ENCODE measurements at regions of chr6 and their contacts with region 1.

Region 1: GRCh38 chr6:123715006-123715875 is 78.5 kb upstream of the TRDN start:
- DNase-seq: no peak
- H3K4me3 Mint-ChIP-seq: no peak overlapping the region
- H3K27ac Mint-ChIP-seq: no peak overlapping the region
- H3K4me1 Mint-ChIP-seq: no peaks in the 10 kb centered on the region
- H3K27me3 Mint-ChIP-seq: no peaks in the 10 kb centered on the region

Region 2: DNA sequence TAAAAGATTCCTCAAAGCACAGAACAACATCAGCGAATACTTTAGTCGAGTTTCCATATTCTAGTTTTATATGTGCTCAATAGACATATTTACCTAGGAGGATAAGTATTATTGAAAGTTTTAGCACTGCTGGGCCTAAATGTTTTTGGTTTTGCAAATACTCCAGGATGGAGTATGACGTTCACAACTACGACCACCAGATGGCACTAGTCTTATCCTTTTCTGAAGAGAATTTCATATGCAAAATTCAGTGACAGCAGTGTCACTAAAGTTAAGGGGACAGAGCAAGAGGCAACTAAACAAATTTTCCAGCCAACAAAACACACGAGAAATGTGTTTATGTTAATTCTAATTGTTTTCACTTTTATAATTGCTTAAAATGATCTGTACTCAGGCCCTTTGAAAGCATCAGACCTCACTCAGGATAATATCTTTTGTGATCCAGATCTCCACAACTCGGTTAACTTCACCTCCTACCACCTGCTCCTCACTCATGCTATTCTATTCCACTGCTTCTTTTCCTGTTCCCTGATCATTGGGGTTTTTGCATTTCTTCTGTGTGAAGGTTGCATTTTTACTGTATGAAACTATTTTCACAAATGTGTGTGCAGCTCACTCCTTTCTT is 299.3 kb before region 1 on chr6:
- CTCF ChIA-PET with region 1: interaction called, 13 read pairs
- DNase-seq: peak; percentile 52
- H3K4me3 Mint-ChIP-seq: no peak overlapping the region
- H3K27ac Mint-ChIP-seq: no peak overlapping the region
- H3K4me1 Mint-ChIP-seq: no peaks in the 10 kb centered on the region
- H3K27me3 Mint-ChIP-seq: no peaks in the 10 kb centered on the region

Region 3: GRCh38 chr6:123562264-123562663 is 153.0 kb before region 1 on chr6:
- CTCF ChIA-PET with region 1: no interaction called
- DNase-seq: no peak
- H3K4me3 Mint-ChIP-seq: no peak overlapping the region
- H3K27ac Mint-ChIP-seq: no peak overlapping the region
- H3K4me1 Mint-ChIP-seq: no peaks in the 10 kb centered on the region
- H3K27me3 Mint-ChIP-seq: no peaks in the 10 kb centered on the region

Region 4: DNA sequence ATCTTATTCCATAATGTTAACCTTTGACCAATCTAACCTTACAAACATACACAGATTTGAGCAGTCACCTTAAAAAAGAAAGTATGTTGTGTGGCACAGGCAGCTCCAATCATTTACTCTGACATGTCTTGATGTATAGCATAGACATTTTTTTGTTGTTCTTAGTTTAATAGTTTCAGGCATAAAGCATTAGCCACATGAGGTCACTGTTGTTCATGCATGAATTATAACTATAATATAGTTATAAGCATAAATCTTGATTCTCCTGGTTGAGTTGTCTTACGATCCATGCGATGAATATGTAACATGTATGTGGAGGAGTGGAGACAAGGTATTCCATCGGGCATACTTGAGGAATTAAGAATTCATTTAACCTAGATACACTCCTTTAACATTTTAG is 62.3 kb after region 1 on chr6:
- CTCF ChIA-PET with region 1: no interaction called
- DNase-seq: no peak
- H3K4me3 Mint-ChIP-seq: no peak overlapping the region
- H3K27ac Mint-ChIP-seq: no peak overlapping the region
- H3K4me1 Mint-ChIP-seq: no peaks in the 10 kb centered on the region
- H3K27me3 Mint-ChIP-seq: no peaks in the 10 kb centered on the region

Measured in activated naive CD4-positive, alpha-beta T cell treated with anti-CD3 and anti-CD28 coated beads, Interleukin-2, amount 10 ng/mL, durations not matched to agents 7 days and 5 days (primary cell).